ENCODE measurements at regions of chr5 and their contacts with region 1.

Region 1: GRCh38 chr5:126656396-126657007 is 55.8 kb downstream of the PHAX start:
- DNase-seq: no peak
- ATAC-seq: no peak
- H3K4me3 Mint-ChIP-seq: no peak overlapping the region
- H3K27ac Mint-ChIP-seq: no peak overlapping the region
- H3K4me1 Mint-ChIP-seq: peaks cover 6% of the 10 kb centered on the region
- H3K27me3 Mint-ChIP-seq: peaks cover 2% of the 10 kb centered on the region
- CTCF ChIP-seq: peak; percentile 51

Region 2: DNA sequence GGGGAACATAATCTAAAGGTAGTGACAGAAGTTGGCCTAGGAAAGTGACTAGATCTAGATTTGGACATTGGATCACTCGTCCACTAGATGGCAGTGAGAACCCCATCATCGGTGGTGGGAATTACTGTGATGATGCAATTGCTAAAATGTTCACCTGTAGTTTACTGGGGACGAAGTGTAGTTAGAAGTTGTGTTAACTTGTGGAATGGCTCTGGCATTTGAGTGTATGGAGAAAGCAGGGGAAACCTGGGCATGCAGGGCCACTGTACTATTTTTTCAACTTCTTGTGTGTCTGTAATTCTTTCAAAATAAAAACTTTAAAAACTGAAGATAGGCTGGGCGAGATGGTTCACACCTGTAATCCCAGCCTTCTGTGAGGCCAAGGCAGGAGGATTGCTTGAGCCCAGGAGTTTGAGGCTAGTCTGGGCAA is 19.7 kb after region 1 on chr5:
- CTCF ChIA-PET with region 1: interaction called, 3 read pairs
- POLR2A ChIA-PET with region 1: no interaction called
- intact Hi-C with region 1: loop called (anchors 1 kb)
- DNase-seq: peak; percentile 19
- ATAC-seq: peak; percentile 82
- H3K4me3 Mint-ChIP-seq: no peak overlapping the region
- H3K27ac Mint-ChIP-seq: peak overlapping the region; percentile 4
- H3K4me1 Mint-ChIP-seq: peaks cover 3% of the 10 kb centered on the region
- H3K27me3 Mint-ChIP-seq: no peaks in the 10 kb centered on the region
- CTCF ChIP-seq: peak; percentile 67

Region 3: DNA sequence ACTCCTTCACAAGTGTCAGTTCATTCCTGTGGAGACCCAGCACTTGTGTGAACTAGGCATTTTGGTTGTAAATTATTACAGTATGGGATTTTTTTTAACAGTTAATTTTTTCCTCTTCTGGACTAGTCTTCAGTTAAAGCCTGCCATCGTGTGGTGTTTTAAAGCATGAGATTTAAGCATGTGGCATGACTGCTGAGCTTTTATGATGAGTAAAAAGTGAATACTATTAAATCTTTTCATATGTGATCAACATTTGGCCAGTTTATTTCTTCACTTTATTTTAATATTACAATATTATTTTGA is 145.4 kb after region 1 on chr5:
- CTCF ChIA-PET with region 1: interaction called, 35 read pairs
- POLR2A ChIA-PET with region 1: no interaction called
- intact Hi-C with region 1: loop called (anchors 1 kb)
- DNase-seq: no peak
- ATAC-seq: peak; percentile 28
- H3K4me3 Mint-ChIP-seq: no peak overlapping the region
- H3K27ac Mint-ChIP-seq: no peak overlapping the region
- H3K4me1 Mint-ChIP-seq: peaks cover 37% of the 10 kb centered on the region
- H3K27me3 Mint-ChIP-seq: no peaks in the 10 kb centered on the region
- CTCF ChIP-seq: no peak

Region 4: GRCh38 chr5:126808521-126808988 is 152.1 kb after region 1 on chr5:
- CTCF ChIA-PET with region 1: interaction called, 35 read pairs
- POLR2A ChIA-PET with region 1: no interaction called
- intact Hi-C with region 1: loop called (anchors 1 kb)
- DNase-seq: no peak
- ATAC-seq: peak; percentile 66
- H3K4me3 Mint-ChIP-seq: peak overlapping the region; percentile 66
- H3K27ac Mint-ChIP-seq: peak overlapping the region; percentile 81
- H3K4me1 Mint-ChIP-seq: peaks cover 63% of the 10 kb centered on the region
- H3K27me3 Mint-ChIP-seq: no peaks in the 10 kb centered on the region
- CTCF ChIP-seq: peak; percentile 35

Region 5: GRCh38 chr5:127441799-127442484 is 785.4 kb after region 1 on chr5:
- CTCF ChIA-PET with region 1: no interaction called
- POLR2A ChIA-PET with region 1: no interaction called
- intact Hi-C with region 1: loop called (anchors 1 kb)
- DNase-seq: no peak
- ATAC-seq: no peak
- H3K4me3 Mint-ChIP-seq: no peak overlapping the region
- H3K27ac Mint-ChIP-seq: no peak overlapping the region
- H3K4me1 Mint-ChIP-seq: no peaks in the 10 kb centered on the region
- H3K27me3 Mint-ChIP-seq: peaks cover 11% of the 10 kb centered on the region
- CTCF ChIP-seq: no peak

Measured in activated B cell treated with CpG ODN at 0.5 μM for 24 hours (primary cell).